ENCODE measurements at regions of chr16 and their contacts with region 1.

Region 1: DNA sequence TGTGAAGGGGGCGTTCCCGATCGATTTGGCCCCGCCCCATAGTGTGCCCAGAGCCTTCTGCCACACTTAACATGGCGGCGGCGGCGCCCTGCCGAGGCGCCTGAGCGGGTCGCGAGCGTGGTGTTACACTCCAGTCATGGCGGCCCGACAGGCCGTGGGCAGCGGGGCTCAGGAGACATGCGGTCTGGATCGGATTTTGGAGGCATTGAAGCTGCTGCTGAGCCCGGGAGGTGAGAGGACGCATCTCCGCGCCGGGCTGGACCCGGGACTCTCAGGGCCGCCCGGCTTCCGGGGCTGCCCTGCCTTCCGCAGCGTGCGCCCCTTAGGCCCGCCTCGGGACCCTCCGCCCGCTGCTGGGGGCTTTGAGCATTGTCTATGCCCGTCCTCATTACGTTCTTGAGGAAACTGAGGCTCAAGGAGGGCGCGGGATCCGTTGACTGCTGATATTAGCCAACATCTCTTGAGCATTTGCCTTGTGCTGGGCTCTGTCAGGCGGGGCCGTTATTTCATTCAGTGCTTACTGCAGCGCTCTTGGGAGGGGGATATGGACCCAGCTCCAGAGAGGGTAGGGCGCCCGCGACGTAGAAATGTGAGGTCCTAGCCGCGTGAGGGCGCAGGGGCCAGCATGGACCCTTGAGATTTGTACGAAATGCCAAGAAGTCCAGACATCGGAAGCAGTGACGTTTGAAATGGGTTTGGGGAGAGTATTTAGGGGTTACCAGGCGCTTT is at the start of gene TANGO6:
- DNase-seq: peak; percentile 81 to 95 (median 89)
- ATAC-seq: peak; percentile 96
- H3K4me3 ChIP-seq: peak within 1 kb of the TSS; percentile 82
- H3K4me3 Mint-ChIP-seq: peak within 1 kb of the TSS; percentile 94
- H3K27ac ChIP-seq: peak within 1 kb of the TSS; percentile 55 to 68
- H3K27ac Mint-ChIP-seq: peak within 1 kb of the TSS; percentile 60
- H3K4me1 ChIP-seq: peaks cover 28% of the 10 kb centered on the region
- H3K4me1 Mint-ChIP-seq: peaks cover 28% of the 10 kb centered on the region
- H3K27me3 ChIP-seq: no peaks in the 10 kb centered on the region
- H3K27me3 Mint-ChIP-seq: no peaks in the 10 kb centered on the region
- CTCF ChIP-seq: peak; percentile 18
- total RNA-seq, gene TANGO6: 17.1 to 18.1 TPM

Region 2: DNA sequence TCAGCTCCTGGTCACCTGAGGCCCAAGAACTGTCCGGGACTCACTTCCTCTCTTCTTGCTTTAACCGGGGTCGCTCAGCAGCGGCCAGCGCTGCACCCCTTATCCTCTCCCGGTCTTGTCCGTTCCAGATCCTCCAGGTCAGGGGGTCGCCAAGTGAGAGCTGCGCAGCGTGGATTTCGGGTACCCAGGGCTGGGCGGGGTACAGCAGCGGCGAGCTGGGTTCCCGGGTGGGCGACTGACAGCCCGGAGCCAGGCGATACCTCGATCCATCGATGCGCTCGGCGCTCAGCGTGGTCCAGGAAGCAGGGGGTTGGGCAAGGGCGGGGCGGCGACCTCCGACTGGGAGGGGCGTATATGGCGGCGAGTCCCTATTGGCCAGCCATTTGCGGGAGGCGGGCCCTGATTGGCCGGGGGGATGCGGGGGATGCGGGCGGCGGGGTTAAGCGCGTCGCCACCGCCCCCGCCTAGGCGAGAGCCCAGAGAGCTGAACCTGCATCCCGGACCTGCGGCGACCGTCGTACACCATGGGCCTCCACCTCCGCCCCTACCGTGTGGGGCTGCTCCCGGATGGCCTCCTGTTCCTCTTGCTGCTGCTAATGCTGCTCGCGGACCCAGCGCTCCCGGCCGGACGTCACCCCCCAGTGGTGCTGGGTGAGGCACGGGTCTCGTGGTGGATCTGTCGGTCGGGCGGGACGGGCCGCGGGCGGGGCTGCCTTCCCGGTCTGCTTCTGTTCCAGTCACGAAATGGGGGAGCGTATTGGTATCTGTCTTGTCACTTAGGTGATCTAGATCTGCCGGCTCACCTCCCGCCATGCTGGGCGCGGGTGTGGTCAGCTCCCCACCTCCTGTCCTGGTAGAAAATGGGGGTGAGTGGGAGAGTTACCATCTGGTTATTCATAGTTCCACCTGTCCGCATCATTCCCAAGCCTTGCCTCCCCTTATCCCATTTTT is 598.5 kb before region 1 on chr16 and contains the start of gene PLA2G15:
- CTCF ChIA-PET with region 1: no interaction called
- POLR2A ChIA-PET with region 1: no interaction called
- intact Hi-C with region 1: loop called in 1 of 2 experiments (anchors 5 kb)
- DNase-seq: peak; percentile 94 to 99 (median 96)
- ATAC-seq: peak; percentile 99
- H3K4me3 ChIP-seq: peak within 1 kb of the TSS; percentile 94
- H3K4me3 Mint-ChIP-seq: peak within 1 kb of the TSS; percentile 99
- H3K27ac ChIP-seq: peak within 1 kb of the TSS in 1 of 2 donors; percentile 21
- H3K27ac Mint-ChIP-seq: peak within 1 kb of the TSS; percentile 50
- H3K4me1 ChIP-seq: peaks cover 29% of the 10 kb centered on the region
- H3K4me1 Mint-ChIP-seq: peaks cover 17% of the 10 kb centered on the region
- H3K27me3 ChIP-seq: no peaks in the 10 kb centered on the region
- H3K27me3 Mint-ChIP-seq: no peaks in the 10 kb centered on the region
- CTCF ChIP-seq: no peak
- total RNA-seq, gene PLA2G15: 4.3 to 4.7 TPM

Region 3: DNA sequence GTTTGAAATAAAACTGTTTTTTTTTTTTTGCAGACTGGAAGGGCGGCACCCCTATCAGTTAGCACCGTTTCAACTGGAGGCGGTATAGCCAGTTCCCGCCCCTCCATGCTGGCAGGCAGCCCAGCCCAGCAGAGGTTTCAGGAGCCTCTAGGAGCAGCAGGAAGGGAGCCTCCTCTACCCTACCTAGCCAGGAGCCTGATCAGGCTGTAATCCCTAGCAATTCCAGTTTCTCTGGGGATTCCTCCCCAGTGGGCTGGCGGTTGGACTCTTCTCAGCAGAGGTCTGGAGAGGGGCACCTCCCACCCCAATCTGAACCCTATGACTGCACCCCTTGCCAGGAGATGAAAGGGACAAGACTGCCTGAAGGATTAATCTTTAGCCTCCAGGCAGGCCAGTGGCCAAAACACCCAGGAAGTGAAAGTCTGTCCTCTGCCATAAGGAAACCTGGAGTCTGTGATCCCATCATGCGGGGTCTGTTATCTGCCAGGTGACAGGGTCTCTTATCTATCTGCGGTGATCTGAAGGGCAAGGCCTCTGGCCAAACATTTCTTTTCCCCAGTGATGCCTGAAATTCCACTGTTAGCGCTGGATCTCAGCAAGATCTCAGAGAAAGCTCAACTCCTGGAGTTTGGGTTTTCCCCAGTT is 111.5 kb before region 1 on chr16:
- CTCF ChIA-PET with region 1: no interaction called
- POLR2A ChIA-PET with region 1: no interaction called
- intact Hi-C with region 1: no loop called
- DNase-seq: no peak
- ATAC-seq: no peak
- H3K4me3 ChIP-seq: no peak overlapping the region
- H3K4me3 Mint-ChIP-seq: no peak overlapping the region
- H3K27ac ChIP-seq: no peak overlapping the region
- H3K27ac Mint-ChIP-seq: no peak overlapping the region
- H3K4me1 ChIP-seq: peaks cover 4% of the 10 kb centered on the region
- H3K4me1 Mint-ChIP-seq: peaks cover 4% of the 10 kb centered on the region
- H3K27me3 ChIP-seq: peaks cover 16 to 26% of the 10 kb centered on the region in 2 experiments
- H3K27me3 Mint-ChIP-seq: peaks cover 51% of the 10 kb centered on the region
- CTCF ChIP-seq: no peak

Region 4: GRCh38 chr16:68873635-68874471 is 30.2 kb after region 1 on chr16:
- CTCF ChIA-PET with region 1: no interaction called
- POLR2A ChIA-PET with region 1: no interaction called
- intact Hi-C with region 1: no loop called
- DNase-seq: no peak
- ATAC-seq: no peak
- H3K4me3 ChIP-seq: no peak overlapping the region
- H3K4me3 Mint-ChIP-seq: no peak overlapping the region
- H3K27ac ChIP-seq: no peak overlapping the region
- H3K27ac Mint-ChIP-seq: no peak overlapping the region
- H3K4me1 ChIP-seq: no peaks in the 10 kb centered on the region
- H3K4me1 Mint-ChIP-seq: no peaks in the 10 kb centered on the region
- H3K27me3 ChIP-seq: no peaks in the 10 kb centered on the region
- H3K27me3 Mint-ChIP-seq: no peaks in the 10 kb centered on the region
- CTCF ChIP-seq: no peak

Region 5: GRCh38 chr16:69123910-69124309 is 280.3 kb after region 1 on chr16:
- CTCF ChIA-PET with region 1: interaction called, 6 read pairs
- POLR2A ChIA-PET with region 1: no interaction called
- intact Hi-C with region 1: loop called (anchors 1 kb)
- DNase-seq: peak; percentile 29 to 84 (median 54)
- ATAC-seq: peak; percentile 95
- H3K4me3 ChIP-seq: no peak overlapping the region
- H3K4me3 Mint-ChIP-seq: no peak overlapping the region
- H3K27ac ChIP-seq: no peak overlapping the region
- H3K27ac Mint-ChIP-seq: no peak overlapping the region
- H3K4me1 ChIP-seq: peaks cover 4% of the 10 kb centered on the region
- H3K4me1 Mint-ChIP-seq: peaks cover 26% of the 10 kb centered on the region
- H3K27me3 ChIP-seq: no peaks in the 10 kb centered on the region
- H3K27me3 Mint-ChIP-seq: no peaks in the 10 kb centered on the region
- CTCF ChIP-seq: peak; percentile 77

Region 6: DNA sequence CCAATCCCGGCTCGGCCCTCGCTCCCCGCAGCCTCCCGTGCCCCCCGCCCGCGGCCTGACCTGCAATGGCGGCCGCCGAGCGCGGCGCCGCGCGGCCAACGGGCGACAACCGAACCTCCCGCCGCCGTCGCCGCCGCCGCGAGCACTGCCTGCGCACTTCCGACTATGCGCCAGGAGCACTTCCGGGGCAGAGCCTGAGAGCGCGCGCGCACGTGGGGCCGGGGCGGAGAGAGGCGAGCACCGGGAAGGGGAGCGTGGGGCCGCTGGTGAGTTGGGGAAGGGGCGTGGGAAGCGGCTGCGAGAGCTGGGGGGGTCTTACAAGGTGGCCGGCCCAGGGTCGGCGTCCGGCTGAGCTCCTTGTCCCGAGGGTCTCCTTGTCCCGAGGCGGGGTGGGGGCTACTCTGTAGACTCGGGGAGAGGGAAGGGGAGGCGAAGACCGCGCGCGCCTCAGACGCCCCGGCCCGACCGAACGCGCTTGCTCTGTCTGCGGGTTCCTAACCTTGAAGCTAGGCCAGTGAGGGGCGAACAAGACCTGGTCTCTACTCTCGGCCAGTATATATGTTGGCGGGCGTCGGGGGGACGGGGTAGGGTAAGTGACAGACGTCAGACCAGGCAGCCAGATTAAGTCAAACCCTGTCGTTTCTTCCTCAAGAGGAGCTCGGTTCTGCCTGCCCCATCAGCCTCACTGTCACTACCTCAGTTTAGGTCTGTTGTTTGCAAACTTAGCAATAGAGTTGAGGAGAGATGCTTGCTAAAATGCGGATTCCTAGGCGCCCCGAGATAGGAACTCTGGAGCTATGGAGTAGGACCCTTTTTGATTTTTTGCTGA is 289.0 kb after region 1 on chr16 and contains the starts of genes CHTF8 and UTP4:
- CTCF ChIA-PET with region 1: interaction called, 3 read pairs
- POLR2A ChIA-PET with region 1: interaction called, 6 read pairs
- intact Hi-C with region 1: loop called in 1 of 2 experiments (anchors 2 kb)
- DNase-seq: peak; percentile 72 to 94 (median 83)
- ATAC-seq: peak; percentile 87
- H3K4me3 ChIP-seq: peak within 1 kb of the TSS; percentile 96
- H3K4me3 Mint-ChIP-seq: peak within 1 kb of the TSS; percentile 96
- H3K27ac ChIP-seq: peak within 1 kb of the TSS; percentile 76 to 79
- H3K27ac Mint-ChIP-seq: peak within 1 kb of the TSS; percentile 95
- H3K4me1 ChIP-seq: peaks cover 22% of the 10 kb centered on the region
- H3K4me1 Mint-ChIP-seq: peaks cover 52% of the 10 kb centered on the region
- H3K27me3 ChIP-seq: no peaks in the 10 kb centered on the region
- H3K27me3 Mint-ChIP-seq: no peaks in the 10 kb centered on the region
- CTCF ChIP-seq: no peak
- total RNA-seq, gene CHTF8: 25.8 to 28.5 TPM
- total RNA-seq, gene UTP4: 40.1 to 40.3 TPM

Region 7: GRCh38 chr16:69386596-69386995 is 543.0 kb after region 1 on chr16:
- CTCF ChIA-PET with region 1: no interaction called
- POLR2A ChIA-PET with region 1: no interaction called
- intact Hi-C with region 1: loop called in 1 of 2 experiments (anchors 5 kb)
- DNase-seq: no peak
- ATAC-seq: no peak
- H3K4me3 ChIP-seq: no peak overlapping the region
- H3K4me3 Mint-ChIP-seq: peak overlapping the region; percentile 90
- H3K27ac ChIP-seq: no peak overlapping the region
- H3K27ac Mint-ChIP-seq: peak overlapping the region; percentile 95
- H3K4me1 ChIP-seq: peaks cover 20% of the 10 kb centered on the region
- H3K4me1 Mint-ChIP-seq: peaks cover 34% of the 10 kb centered on the region
- H3K27me3 ChIP-seq: no peaks in the 10 kb centered on the region
- H3K27me3 Mint-ChIP-seq: no peaks in the 10 kb centered on the region
- CTCF ChIP-seq: no peak

Measured in CD4-positive, alpha-beta T cell (primary cell).